ENCODE measurements at regions of chr17 and their contacts with region 1.

Region 1: GRCh38 chr17:1331708-1332107 is 52.2 kb downstream of the TRARG1 start:
- DNase-seq: no peak
- H3K4me3 ChIP-seq: no peak overlapping the region
- H3K27ac ChIP-seq: no peak overlapping the region
- H3K4me1 ChIP-seq: no peaks in the 10 kb centered on the region
- H3K27me3 ChIP-seq: no peaks in the 10 kb centered on the region
- CTCF ChIP-seq: no peak
- EP300 ChIP-seq: no peak
- POLR2A ChIP-seq: no peak
- RAD21 ChIP-seq: no peak

Region 2: GRCh38 chr17:520447-521182 is 811.1 kb before region 1 on chr17:
- CTCF ChIA-PET with region 1: no interaction called
- POLR2A ChIA-PET with region 1: no interaction called
- DNase-seq: no peak
- H3K4me3 ChIP-seq: no peak overlapping the region
- H3K27ac ChIP-seq: 0 out of 2 replicates have a peak overlapping the region, but pooled peaks have one; percentile 4
- H3K4me1 ChIP-seq: peaks cover 0 to 13% (median 8%) of the 10 kb centered on the region in 4 experiments; a peak in 6 of 7 replicates
- H3K27me3 ChIP-seq: no peaks in the 10 kb centered on the region
- CTCF ChIP-seq: no peak
- EP300 ChIP-seq: no peak
- POLR2A ChIP-seq: no peak
- RAD21 ChIP-seq: no peak

Region 3: DNA sequence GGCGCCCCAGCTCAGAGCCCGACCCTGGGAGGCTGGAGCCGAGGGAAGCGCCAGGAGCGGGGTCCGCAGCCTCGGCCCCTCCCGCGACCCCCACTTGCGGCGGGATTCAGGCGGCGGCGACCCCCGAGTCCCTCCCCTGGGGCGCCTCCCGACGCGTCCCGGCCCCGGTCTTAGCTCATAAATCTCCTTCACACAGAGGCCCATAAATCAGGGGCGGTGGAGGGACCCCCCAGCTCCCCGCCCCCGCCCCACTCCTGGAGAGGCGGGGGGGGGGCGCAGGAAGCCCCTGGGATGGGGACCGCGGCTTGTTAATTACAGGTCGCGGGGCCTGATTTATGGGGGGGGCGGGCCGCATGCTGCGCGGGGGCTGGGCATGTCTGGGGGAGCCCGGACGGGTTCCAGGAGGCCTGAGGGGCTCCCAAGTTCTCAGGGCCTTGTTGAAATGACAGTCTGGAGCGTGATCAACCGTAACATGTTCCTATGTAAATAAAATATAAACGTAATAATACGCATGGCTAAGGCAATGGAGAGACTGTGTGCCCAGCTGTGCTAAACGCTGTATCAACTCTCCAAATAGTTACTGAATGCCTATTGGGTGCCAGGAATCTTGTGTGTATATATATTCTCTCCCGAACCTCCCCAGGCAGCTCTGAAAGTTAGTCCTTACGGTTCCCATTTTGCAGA is 71.5 kb before region 1 on chr17:
- CTCF ChIA-PET with region 1: interaction called, 21 read pairs
- POLR2A ChIA-PET with region 1: no interaction called
- DNase-seq: no peak
- H3K4me3 ChIP-seq: peak overlapping the region; percentile 30 to 68 (median 52)
- H3K27ac ChIP-seq: no peak overlapping the region
- H3K4me1 ChIP-seq: no peaks in the 10 kb centered on the region; a peak in 1 of 7 replicates
- H3K27me3 ChIP-seq: peaks cover 6 to 24% (median 18%) of the 10 kb centered on the region in 4 experiments
- CTCF ChIP-seq: no peak
- EP300 ChIP-seq: no peak
- POLR2A ChIP-seq: no peak
- RAD21 ChIP-seq: no peak

Region 4: GRCh38 chr17:1267471-1267947 is 64.2 kb before region 1 on chr17:
- CTCF ChIA-PET with region 1: interaction called, 20 read pairs
- POLR2A ChIA-PET with region 1: no interaction called
- DNase-seq: no peak
- H3K4me3 ChIP-seq: peak overlapping the region; percentile 57 to 85 (median 72)
- H3K27ac ChIP-seq: no peak overlapping the region
- H3K4me1 ChIP-seq: peaks cover 0 to 9% (median 4%) of the 10 kb centered on the region in 4 experiments; a peak in 4 of 7 replicates
- H3K27me3 ChIP-seq: peaks cover 3 to 30% (median 16%) of the 10 kb centered on the region in 4 experiments; a peak in 6 of 7 replicates
- CTCF ChIP-seq: no peak
- EP300 ChIP-seq: no peak
- POLR2A ChIP-seq: no peak
- RAD21 ChIP-seq: no peak

Region 5: GRCh38 chr17:1275962-1276736 is 55.6 kb before region 1 on chr17:
- CTCF ChIA-PET with region 1: interaction called, 54 read pairs
- POLR2A ChIA-PET with region 1: interaction called, 6 read pairs
- DNase-seq: peak in 1 of 2 experiments; percentile 93
- H3K4me3 ChIP-seq: no peak overlapping the region
- H3K27ac ChIP-seq: no peak overlapping the region
- H3K4me1 ChIP-seq: peaks cover 0 to 7% (median 2%) of the 10 kb centered on the region in 4 experiments; a peak in 4 of 7 replicates
- H3K27me3 ChIP-seq: peaks cover 0 to 12% (median 6%) of the 10 kb centered on the region in 4 experiments; a peak in 6 of 7 replicates
- CTCF ChIP-seq: peak; percentile 83 to 96 (median 93)
- EP300 ChIP-seq: no peak
- POLR2A ChIP-seq: no peak
- RAD21 ChIP-seq: peak; percentile 96

Region 6: DNA sequence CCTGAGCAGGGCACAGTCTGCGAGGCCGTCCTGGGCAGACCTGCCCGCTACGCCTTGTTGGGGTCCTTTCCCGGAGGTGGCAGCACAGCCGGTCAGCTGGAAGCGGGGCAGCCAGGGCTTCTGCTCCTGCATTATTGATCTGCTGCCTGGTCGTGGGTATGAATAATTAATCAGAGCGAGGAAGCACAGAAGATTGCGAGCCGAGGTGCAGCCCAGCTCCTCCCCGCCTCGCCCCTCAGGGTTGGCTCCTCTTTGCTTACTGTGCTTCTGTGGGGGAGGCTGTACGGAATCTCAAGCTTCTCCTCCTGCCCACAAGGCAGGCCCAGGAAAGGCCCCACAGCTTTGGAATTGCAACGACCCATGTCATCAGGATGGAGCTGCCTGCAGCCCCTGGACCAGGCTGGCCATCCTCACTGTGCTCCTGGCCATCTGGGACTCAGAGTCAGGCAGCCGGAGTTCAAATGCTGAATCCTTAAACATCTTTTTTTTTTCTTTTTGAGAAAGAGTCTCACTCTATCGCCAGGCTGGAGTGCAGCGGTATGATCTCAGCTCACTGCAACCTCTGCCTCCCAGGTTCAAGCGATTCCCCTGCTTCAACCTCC is 26.6 kb before region 1 on chr17:
- CTCF ChIA-PET with region 1: interaction called, 12 read pairs
- POLR2A ChIA-PET with region 1: no interaction called
- DNase-seq: no peak
- H3K4me3 ChIP-seq: no peak overlapping the region
- H3K27ac ChIP-seq: no peak overlapping the region
- H3K4me1 ChIP-seq: no peaks in the 10 kb centered on the region
- H3K27me3 ChIP-seq: no peaks in the 10 kb centered on the region
- CTCF ChIP-seq: no peak
- EP300 ChIP-seq: no peak
- POLR2A ChIP-seq: no peak
- RAD21 ChIP-seq: no peak

Region 7: DNA sequence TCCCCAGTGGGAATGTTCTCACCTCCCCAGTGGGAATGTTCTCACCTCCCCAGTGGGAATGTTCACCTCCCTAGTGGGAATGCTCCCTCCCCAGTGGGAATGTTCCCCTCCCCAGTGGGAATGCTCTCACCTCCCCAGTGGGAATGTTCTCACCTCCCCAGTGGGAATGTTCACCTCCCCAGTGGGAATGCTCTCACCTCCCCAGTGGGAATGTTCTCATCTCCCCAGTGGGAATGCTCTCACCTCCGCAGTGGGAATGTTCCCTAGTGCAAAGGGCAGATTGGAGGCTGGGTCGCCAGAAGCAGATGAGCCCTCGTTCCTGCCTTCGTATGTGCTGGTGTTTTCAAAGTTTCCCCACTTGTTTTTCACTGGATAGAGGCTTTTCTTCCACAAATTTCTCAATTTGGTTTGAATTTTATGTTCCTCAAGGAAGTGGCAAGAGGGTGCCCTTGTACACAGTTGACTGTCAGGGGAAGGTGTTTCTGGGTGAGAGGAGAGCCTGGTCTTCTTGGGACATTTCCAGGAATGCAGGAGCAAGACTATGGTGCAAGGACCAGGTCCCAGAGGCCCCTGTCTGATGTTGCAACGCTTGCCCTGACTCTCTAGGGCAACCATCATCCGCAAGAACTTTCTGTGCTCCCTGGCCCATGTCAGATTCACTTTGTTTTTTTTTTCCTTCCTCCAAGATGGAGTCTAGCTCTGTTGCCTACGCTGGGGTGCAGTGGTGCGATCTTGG is 18.3 kb before region 1 on chr17:
- CTCF ChIA-PET with region 1: interaction called, 10 read pairs
- POLR2A ChIA-PET with region 1: interaction called, 4 read pairs
- DNase-seq: no peak
- H3K4me3 ChIP-seq: no peak overlapping the region
- H3K27ac ChIP-seq: no peak overlapping the region
- H3K4me1 ChIP-seq: no peaks in the 10 kb centered on the region
- H3K27me3 ChIP-seq: no peaks in the 10 kb centered on the region
- CTCF ChIP-seq: no peak
- EP300 ChIP-seq: no peak
- POLR2A ChIP-seq: no peak
- RAD21 ChIP-seq: no peak